ENCODE measurements at regions of chr3 and their contacts with region 1.

Region 1: GRCh38 chr3:191944835-191945234 is 483.9 kb downstream of the PYDC2 start:
- DNase-seq: no peak
- H3K4me3 Mint-ChIP-seq: no peak overlapping the region
- H3K27ac Mint-ChIP-seq: no peak overlapping the region
- H3K4me1 Mint-ChIP-seq: no peaks in the 10 kb centered on the region
- H3K27me3 Mint-ChIP-seq: no peaks in the 10 kb centered on the region
- CTCF ChIP-seq: no peak

Region 2: GRCh38 chr3:191715585-191715984 is 229.2 kb before region 1 on chr3:
- CTCF ChIA-PET with region 1: interaction called, 11 read pairs
- intact Hi-C with region 1: no loop called
- DNase-seq: no peak
- H3K4me3 Mint-ChIP-seq: no peak overlapping the region
- H3K27ac Mint-ChIP-seq: no peak overlapping the region
- H3K4me1 Mint-ChIP-seq: no peaks in the 10 kb centered on the region
- H3K27me3 Mint-ChIP-seq: no peaks in the 10 kb centered on the region
- CTCF ChIP-seq: no peak

Region 3: DNA sequence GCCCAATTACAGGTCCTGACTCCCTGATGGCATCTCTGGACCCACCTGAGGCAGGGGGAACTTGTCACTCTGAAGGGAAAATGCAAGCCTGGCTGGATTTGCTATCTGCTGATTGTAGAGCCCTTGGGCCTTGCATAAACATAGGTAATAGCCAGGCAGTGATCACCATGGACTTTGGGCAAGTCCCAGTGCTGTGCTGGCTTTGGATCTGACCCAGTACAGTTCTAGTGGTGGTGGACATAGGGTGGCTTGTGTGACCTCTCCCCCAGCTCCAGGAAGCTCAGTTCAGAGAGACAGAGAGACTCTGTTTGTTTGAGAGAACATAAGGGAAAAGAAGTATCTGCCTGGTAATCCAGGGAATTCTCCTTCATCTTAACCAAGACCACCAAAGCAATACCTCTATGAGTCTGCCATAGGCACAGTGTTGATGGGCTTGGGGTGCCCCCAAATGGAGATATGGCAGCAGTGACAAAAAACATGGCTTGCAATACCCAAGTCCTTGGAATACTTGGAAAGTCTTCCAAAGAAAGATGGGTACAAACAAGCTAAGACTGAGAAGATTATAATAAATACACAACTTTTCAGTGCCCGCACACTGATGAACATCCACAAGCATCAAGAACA is 135.4 kb before region 1 on chr3:
- CTCF ChIA-PET with region 1: no interaction called
- intact Hi-C with region 1: no loop called
- DNase-seq: peak; percentile 35
- H3K4me3 Mint-ChIP-seq: no peak overlapping the region
- H3K27ac Mint-ChIP-seq: no peak overlapping the region
- H3K4me1 Mint-ChIP-seq: no peaks in the 10 kb centered on the region
- H3K27me3 Mint-ChIP-seq: no peaks in the 10 kb centered on the region
- CTCF ChIP-seq: no peak

Region 4: DNA sequence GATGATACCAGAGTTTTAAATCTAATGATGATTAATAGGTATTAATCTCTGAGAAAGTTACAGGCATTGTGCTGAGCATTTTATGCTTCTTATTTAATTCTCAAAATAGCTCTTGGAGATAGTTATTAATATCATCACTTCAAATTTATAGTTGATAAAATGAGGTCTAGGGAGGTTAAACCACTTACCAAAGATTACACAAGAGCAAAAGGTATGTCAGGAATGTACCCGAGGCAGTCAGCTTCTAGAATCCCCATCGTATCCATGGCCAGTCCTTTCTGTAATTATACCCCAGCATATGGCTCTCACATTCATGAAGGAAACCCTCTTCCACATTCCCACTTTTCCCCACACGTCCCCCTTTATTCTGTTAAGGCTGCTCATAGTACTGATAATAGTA is 62.5 kb before region 1 on chr3:
- CTCF ChIA-PET with region 1: no interaction called
- intact Hi-C with region 1: no loop called
- DNase-seq: peak; percentile 9
- H3K4me3 Mint-ChIP-seq: no peak overlapping the region
- H3K27ac Mint-ChIP-seq: no peak overlapping the region
- H3K4me1 Mint-ChIP-seq: peaks cover 7% of the 10 kb centered on the region
- H3K27me3 Mint-ChIP-seq: no peaks in the 10 kb centered on the region
- CTCF ChIP-seq: no peak

Region 5: GRCh38 chr3:192331749-192332385 is 387.0 kb after region 1 on chr3:
- CTCF ChIA-PET with region 1: no interaction called
- intact Hi-C with region 1: no loop called
- DNase-seq: no peak
- H3K4me3 Mint-ChIP-seq: no peak overlapping the region
- H3K27ac Mint-ChIP-seq: no peak overlapping the region
- H3K4me1 Mint-ChIP-seq: no peaks in the 10 kb centered on the region
- H3K27me3 Mint-ChIP-seq: no peaks in the 10 kb centered on the region
- CTCF ChIP-seq: no peak

Measured in Calu3 (cell line).